Left cardiac atrium (tissue), 4 donors: ENCODE measurements at regions of chr11 and their contacts with region 1.

Region 1: GRCh38 chr11:27472398-27473016 is at the start of gene LGR4:
- DNase-seq: peak; percentile 95
- ATAC-seq: peak; percentile 93 to 97
- total RNA-seq, gene LGR4: 29.0 to 33.3 TPM

Region 2: GRCh38 chr11:27362749-27363575 is 109.5 kb before region 1 on chr11 and contains the start of gene CCDC34:
- intact Hi-C with region 1: loop called in 1 of 2 experiments (anchors 10 kb)
- DNase-seq: peak; percentile 93
- ATAC-seq: peak; percentile 99 to 100
- total RNA-seq, gene CCDC34: 2.0 to 3.0 TPM